ENCODE measurements at regions of chr17 and their contacts with region 1.

Region 1: GRCh38 chr17:43483674-43484372 is at the start of gene DHX8:
- DNase-seq: peak; percentile 96 to 98
- ATAC-seq: peak; percentile 98 to 100 (median 98)
- H3K4me3 ChIP-seq: peak within 1 kb of the TSS; percentile 83
- H3K27ac ChIP-seq: peak within 1 kb of the TSS; percentile 79
- H3K4me1 ChIP-seq: peaks cover 17% of the 10 kb centered on the region
- H3K27me3 ChIP-seq: no peaks in the 10 kb centered on the region
- CTCF ChIP-seq: peak; percentile 100
- total RNA-seq, gene DHX8: 22.5 to 42.5 (median 27.9) TPM

Region 2: GRCh38 chr17:43211480-43212402 is 272.1 kb before region 1 on chr17 and contains the start of gene TMEM106A:
- intact Hi-C with region 1: loop called in 1 of 2 experiments (anchors 10 kb)
- DNase-seq: peak; percentile 80 to 84
- ATAC-seq: peak; percentile 48 to 75 (median 59)
- H3K4me3 ChIP-seq: peak within 1 kb of the TSS; percentile 71
- H3K27ac ChIP-seq: peak within 1 kb of the TSS; percentile 66
- H3K4me1 ChIP-seq: no peaks in the 10 kb centered on the region
- H3K27me3 ChIP-seq: no peaks in the 10 kb centered on the region
- CTCF ChIP-seq: no peak
- total RNA-seq, gene TMEM106A: 1.9 to 3.4 (median 2.6) TPM

Region 3: DNA sequence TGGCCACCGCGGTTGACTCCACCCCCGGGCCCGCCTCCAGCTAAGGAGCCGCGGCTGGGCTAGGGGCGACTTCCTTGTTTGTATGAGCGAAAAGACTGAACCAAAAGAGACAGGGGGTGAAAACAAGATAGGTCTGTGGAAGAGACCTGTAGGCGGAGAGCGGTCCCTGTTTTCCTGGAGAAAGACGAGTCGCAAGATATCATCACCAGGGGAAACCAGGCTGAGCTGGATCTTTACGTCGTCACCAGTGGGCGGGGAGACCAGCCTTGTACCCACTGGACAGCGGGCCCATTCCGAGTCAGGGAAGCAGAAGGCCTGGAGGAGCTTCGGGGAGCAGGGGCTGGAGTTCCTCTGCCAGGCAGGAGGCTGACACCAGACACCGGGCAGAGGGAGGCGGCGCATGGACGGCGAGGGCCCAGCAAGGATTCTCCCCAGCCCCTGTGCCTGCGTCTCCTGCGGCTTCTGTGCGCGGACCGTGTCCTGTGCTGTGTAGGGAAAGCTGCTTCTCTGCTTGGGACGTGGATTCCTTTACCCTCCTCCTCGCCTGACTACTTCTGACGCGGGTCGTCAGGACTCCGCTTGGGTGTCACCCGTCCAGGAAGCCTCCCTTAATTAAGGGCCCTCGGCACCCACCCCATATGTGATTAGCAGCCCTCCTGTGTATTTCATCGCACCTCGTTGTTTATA is 95.3 kb before region 1 on chr17:
- intact Hi-C with region 1: loop called (anchors 1 to 2 kb)
- DNase-seq: peak; percentile 93 to 95
- ATAC-seq: peak; percentile 89 to 92 (median 92)
- H3K4me3 ChIP-seq: peak overlapping the region; percentile 81
- H3K27ac ChIP-seq: peak overlapping the region; percentile 98
- H3K4me1 ChIP-seq: peaks cover 5% of the 10 kb centered on the region
- H3K27me3 ChIP-seq: no peaks in the 10 kb centered on the region
- CTCF ChIP-seq: no peak

Region 4: DNA sequence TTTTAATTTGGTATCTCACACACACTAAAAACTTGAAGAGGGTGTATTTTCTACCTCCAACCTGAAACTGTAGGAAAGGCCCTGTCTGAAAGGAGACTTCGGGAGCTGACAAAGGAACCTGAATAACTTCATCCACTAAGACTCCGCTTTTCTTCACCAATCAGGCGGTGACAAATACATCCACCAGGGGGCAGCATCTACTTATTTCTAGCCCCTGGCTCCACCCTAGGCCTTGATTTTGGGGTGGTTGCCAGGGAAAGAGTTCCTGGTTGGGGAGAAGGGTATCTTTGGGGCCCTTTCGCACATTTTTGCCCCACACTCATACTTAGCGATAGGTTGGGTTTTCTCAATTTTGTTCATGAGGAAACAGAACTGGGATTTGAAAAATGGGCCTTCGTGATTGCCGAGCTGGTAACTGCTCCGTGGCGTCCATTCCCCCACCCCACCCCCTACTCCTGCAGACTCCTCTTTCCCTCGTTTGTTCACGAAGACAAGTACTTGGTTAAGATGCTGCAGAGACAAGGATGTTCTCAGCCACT is 89.8 kb before region 1 on chr17:
- intact Hi-C with region 1: loop called (anchors 1 to 2 kb)
- DNase-seq: peak; percentile 87 to 91
- ATAC-seq: peak; percentile 71 to 76 (median 73)
- H3K4me3 ChIP-seq: peak overlapping the region; percentile 50
- H3K27ac ChIP-seq: peak overlapping the region; percentile 24
- H3K4me1 ChIP-seq: peaks cover 4% of the 10 kb centered on the region
- H3K27me3 ChIP-seq: no peaks in the 10 kb centered on the region
- CTCF ChIP-seq: peak; percentile 93

Region 5: GRCh38 chr17:43431714-43432523 is 51.9 kb before region 1 on chr17:
- intact Hi-C with region 1: no loop called
- DNase-seq: peak in 1 of 2 donors; percentile 16
- ATAC-seq: peak in 2 of 4 donors; percentile 40 to 41
- H3K4me3 ChIP-seq: no peak overlapping the region
- H3K27ac ChIP-seq: no peak overlapping the region
- H3K4me1 ChIP-seq: no peaks in the 10 kb centered on the region
- H3K27me3 ChIP-seq: peaks cover 0 to 20% (median 0%) of the 10 kb centered on the region in 3 donors
- CTCF ChIP-seq: no peak

Measured in psoas muscle (tissue), 8 donors.